Posterior vena cava (tissue), 2 donors: ENCODE measurements at regions of chr14 and their contacts with region 1.

Region 1: DNA sequence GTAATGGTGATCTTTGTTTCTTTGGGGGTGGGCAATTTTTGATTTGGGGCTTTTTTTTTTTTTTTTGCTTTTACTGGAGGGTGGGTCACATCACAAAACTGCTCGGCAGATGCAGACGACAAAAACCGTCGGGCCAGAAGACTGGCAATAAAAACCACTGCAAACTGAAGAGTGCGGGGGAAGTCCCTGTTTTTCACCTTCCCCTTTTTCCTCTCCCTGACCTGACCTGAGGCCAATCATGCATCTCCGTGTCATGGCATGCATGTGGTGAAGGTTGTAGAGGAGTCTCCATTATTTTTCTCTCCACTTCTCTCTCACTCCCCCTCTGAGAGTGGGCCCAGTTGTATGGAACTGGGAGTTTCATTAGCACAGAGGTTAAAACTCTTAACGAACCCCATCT is 57.5 kb downstream of the AP5M1 start:
- DNase-seq: no peak

Region 2: DNA sequence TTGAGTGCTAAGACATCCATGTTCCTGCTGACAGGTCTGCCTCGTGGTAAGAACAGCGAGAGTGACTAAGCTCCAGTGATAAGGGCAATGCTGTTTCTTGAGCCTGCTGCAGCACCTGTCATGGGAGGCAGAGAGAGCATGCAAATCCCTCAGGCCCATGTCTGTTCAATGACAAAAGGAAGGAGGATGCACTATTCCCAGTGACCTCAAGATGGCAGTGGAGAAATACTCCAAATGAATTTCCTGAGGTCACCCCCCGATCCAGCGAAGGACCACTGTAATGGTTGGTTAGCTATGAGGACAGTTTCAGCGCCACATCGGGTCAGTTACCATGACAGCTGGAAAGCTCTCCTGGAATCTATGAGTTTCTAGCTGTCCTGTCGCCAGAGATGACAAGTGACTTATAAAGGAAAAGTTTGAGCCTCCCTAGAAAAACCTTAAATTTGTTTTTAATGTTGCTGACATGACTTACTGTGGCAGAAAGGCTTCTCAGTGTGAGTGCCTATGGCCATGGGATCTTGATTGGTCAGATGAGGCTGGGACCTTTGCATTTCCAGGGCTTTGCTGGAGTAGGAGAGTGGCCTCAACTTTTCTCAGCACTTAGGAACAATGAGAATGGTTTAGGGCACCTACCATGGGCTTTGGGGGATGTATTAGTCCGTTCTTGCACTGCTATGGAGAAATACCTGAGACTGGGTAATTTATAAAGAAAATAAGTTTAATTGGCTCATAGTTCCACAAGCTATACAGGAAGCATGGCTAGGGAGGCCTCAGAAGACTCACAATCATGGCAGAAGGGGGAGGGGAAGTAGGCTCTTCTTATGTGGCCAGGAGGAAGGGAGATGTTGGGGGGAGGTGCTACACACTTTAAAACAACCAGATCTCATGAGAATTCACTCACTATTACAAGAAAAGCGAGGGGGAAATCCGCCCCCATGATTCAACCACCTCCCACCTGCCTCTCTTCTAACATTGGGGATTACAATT is 834.7 kb before region 1 on chr14:
- intact Hi-C with region 1: loop called in 1 of 2 experiments (anchors 10 kb)
- DNase-seq: no peak

Region 3: GRCh38 chr14:57362361-57362760 is 36.1 kb after region 1 on chr14:
- intact Hi-C with region 1: no loop called
- DNase-seq: no peak

Region 4: GRCh38 chr14:57464013-57464730 is 137.9 kb after region 1 on chr14:
- intact Hi-C with region 1: no loop called
- DNase-seq: no peak